PC-9 (cell line): ENCODE measurements at regions of chr21 and their contacts with region 1.

Region 1: GRCh38 chr21:45129189-45129923 is 55.0 kb downstream of the ADARB1 start:
- DNase-seq: peak in 1 of 2 experiments; percentile 68
- H3K4me3 ChIP-seq: no peak overlapping the region
- H3K27ac ChIP-seq: no peak overlapping the region
- H3K4me1 ChIP-seq: peaks cover 9% of the 10 kb centered on the region; the same call in 1 of the 2 replicates
- H3K27me3 ChIP-seq: no peaks in the 10 kb centered on the region
- CTCF ChIP-seq: no peak

Region 2: GRCh38 chr21:44444286-44444931 is 684.9 kb before region 1 on chr21:
- CTCF ChIA-PET with region 1: interaction called, 11 read pairs
- POLR2A ChIA-PET with region 1: no interaction called
- intact Hi-C with region 1: no loop called
- DNase-seq: no peak
- H3K4me3 ChIP-seq: no peak overlapping the region
- H3K27ac ChIP-seq: no peak overlapping the region
- H3K4me1 ChIP-seq: no peaks in the 10 kb centered on the region
- H3K27me3 ChIP-seq: peaks cover 72% of the 10 kb centered on the region
- CTCF ChIP-seq: peak; percentile 36; the same call in 1 of the 2 replicates

Region 3: GRCh38 chr21:44670642-44671432 is 458.5 kb before region 1 on chr21:
- CTCF ChIA-PET with region 1: no interaction called
- POLR2A ChIA-PET with region 1: no interaction called
- intact Hi-C with region 1: no loop called
- DNase-seq: no peak
- H3K4me3 ChIP-seq: no peak overlapping the region
- H3K27ac ChIP-seq: no peak overlapping the region
- H3K4me1 ChIP-seq: no peaks in the 10 kb centered on the region
- H3K27me3 ChIP-seq: peaks cover 27% of the 10 kb centered on the region
- CTCF ChIP-seq: no peak

Region 4: GRCh38 chr21:44801468-44802395 is 327.6 kb before region 1 on chr21 and contains the start of gene UBE2G2:
- CTCF ChIA-PET with region 1: no interaction called
- POLR2A ChIA-PET with region 1: no interaction called
- intact Hi-C with region 1: loop called (anchors 5 kb)
- DNase-seq: peak; percentile 47 to 77
- H3K4me3 ChIP-seq: peak within 1 kb of the TSS; percentile 88
- H3K27ac ChIP-seq: no peak within 1 kb of the TSS
- H3K4me1 ChIP-seq: peaks cover 11% of the 10 kb centered on the region
- H3K27me3 ChIP-seq: no peaks in the 10 kb centered on the region
- CTCF ChIP-seq: no peak; the same call in 1 of the 2 replicates
- total RNA-seq, gene UBE2G2: 51.9 and 52.7 TPM in 2 replicates

Region 5: DNA sequence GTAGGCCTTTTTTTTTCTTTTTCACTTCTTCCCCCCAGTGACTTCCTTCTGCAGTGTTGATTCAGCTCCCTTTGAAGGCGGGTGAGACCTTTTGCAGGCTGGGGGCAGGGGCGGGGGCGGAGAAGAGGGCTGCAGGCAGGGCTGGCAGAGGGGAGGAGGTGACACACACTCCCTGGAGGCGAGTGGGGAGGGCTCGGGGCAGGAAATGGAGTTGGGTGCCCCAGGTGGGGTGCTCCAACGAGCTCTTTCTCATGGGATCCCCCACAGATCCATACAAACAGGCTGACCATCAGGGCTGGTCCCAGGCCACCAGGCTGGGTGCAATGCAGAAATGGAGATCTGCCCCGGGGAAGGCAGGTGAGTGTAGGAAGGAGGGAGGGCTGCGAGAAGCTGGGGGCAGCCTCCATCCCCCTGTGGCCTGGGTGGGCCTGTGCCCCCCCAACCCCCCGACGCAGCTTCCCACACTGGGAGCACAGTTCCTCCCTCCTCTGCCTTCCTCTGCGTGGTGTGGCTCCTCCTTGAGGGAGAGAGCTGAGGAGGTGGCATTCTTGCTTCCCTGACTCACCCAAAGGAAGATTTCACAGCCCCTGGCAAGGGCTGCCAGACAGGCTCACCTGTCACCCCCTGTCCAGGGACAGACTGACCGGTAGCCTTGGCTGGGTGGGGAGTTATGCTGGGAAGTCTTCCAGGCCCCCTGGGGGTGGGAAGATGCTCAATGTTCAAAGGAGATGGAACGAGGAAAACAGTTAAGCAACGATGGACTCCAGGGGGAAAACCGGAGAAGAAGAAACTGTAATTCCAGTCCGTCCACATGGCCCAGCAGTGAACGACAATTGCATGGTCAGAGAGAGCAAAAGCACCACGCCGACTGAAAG is 201.5 kb before region 1 on chr21:
- CTCF ChIA-PET with region 1: no interaction called
- POLR2A ChIA-PET with region 1: no interaction called
- intact Hi-C with region 1: no loop called
- DNase-seq: peak; percentile 92 to 95
- H3K4me3 ChIP-seq: peak overlapping the region; percentile 39; the same call in 1 of the 2 replicates
- H3K27ac ChIP-seq: peak overlapping the region; percentile 97
- H3K4me1 ChIP-seq: peaks cover 62% of the 10 kb centered on the region
- H3K27me3 ChIP-seq: no peaks in the 10 kb centered on the region
- CTCF ChIP-seq: peak; percentile 45; the same call in 1 of the 2 replicates

Region 6: DNA sequence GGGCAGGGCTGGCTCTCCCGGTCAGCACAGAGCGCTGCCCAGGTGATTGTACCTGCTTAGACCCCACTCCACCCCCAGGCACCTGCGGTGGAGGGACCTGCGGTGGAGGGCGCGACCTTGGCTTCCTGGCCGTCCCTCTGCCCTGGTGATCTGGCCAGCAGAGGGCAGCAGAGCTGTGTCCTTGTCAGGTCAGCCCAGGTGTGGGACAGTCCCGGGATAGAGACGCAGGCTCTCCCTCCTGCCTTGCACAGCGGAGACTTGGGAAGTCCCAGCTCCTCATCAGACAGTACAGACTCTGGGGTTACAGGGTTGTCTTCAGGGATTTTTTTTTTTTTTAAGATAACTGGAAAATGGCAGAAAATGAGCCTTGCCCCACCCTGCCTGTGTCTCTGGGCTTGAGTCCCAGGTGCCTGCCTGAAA is 179.6 kb before region 1 on chr21:
- CTCF ChIA-PET with region 1: interaction called, 20 read pairs
- POLR2A ChIA-PET with region 1: no interaction called
- intact Hi-C with region 1: loop called (anchors 1 kb)
- DNase-seq: peak in 1 of 2 experiments; percentile 74
- H3K4me3 ChIP-seq: no peak overlapping the region
- H3K27ac ChIP-seq: no peak overlapping the region
- H3K4me1 ChIP-seq: no peaks in the 10 kb centered on the region
- H3K27me3 ChIP-seq: no peaks in the 10 kb centered on the region
- CTCF ChIP-seq: peak; percentile 86

Region 7: DNA sequence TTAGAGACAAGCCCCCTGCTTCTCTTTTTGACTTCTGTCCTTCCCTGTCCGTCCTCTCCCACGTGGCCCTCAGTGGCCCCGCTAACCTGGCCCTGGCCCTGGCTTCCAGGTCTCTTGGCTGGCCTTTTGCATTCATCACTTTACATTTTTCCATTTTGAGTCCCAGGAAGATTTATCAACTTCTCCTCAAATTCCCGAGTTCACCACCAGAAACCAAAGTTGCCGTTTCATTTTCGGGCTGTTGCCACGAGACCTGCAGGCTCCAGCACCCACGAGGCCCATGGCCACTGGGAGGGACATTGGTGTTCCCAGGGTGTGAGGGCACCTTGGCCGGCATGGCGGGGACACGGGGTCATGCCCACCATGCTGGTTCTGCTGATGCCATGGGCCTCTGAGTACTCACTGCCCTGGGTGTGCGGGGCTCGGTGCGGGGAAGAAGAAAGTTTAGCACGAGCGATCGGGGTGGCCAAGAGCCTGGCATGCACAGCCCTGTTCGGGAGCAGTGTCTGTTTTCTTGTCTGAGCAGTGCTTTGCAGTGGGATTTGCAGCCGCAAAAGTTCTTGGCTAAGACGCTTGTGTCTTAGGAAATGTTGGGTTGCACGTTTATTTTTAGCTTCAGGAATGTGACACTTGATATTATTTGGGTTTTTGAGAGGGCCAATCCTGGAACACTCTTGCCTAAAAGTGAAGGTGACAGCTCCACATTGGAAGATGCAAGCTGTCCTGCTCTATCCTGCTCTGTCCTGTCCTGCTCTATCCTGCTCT is 95.4 kb before region 1 on chr21:
- CTCF ChIA-PET with region 1: no interaction called
- POLR2A ChIA-PET with region 1: no interaction called
- intact Hi-C with region 1: no loop called
- DNase-seq: no peak
- H3K4me3 ChIP-seq: no peak overlapping the region
- H3K27ac ChIP-seq: no peak overlapping the region
- H3K4me1 ChIP-seq: no peaks in the 10 kb centered on the region
- H3K27me3 ChIP-seq: no peaks in the 10 kb centered on the region; the same call in 1 of the 2 replicates
- CTCF ChIP-seq: no peak

Region 8: GRCh38 chr21:45073301-45074047 is 55.9 kb before region 1 on chr21:
- CTCF ChIA-PET with region 1: interaction called, 3 read pairs
- POLR2A ChIA-PET with region 1: interaction called, 4 read pairs
- intact Hi-C with region 1: loop called (anchors 2 kb)
- DNase-seq: peak; percentile 74 to 79
- H3K4me3 ChIP-seq: peak overlapping the region; percentile 37; the same call in 1 of the 2 replicates
- H3K27ac ChIP-seq: peak overlapping the region; percentile 66
- H3K4me1 ChIP-seq: peaks cover 6% of the 10 kb centered on the region; the same call in 1 of the 2 replicates
- H3K27me3 ChIP-seq: no peaks in the 10 kb centered on the region
- CTCF ChIP-seq: no peak

Region 9: DNA sequence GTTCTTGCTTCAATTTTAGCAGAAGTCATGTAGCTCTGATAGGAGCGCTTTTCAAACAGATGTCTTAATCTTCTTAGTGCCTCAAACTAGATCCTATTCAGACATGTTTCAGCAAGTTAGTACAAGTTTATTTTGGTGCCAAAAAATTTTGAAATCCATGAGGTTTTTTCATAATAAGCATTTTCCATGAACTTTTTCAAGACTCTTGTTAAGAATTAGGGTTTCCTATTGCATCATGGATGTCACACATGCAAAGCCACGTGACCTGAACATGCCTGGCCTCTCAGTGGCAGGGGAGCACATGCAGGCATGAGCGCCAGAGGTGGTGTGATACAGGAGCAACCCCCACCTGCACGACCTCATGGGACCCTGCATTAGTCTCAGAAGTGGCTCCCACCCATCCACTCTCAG is 90.7 kb after region 1 on chr21:
- CTCF ChIA-PET with region 1: no interaction called
- POLR2A ChIA-PET with region 1: no interaction called
- intact Hi-C with region 1: no loop called
- DNase-seq: no peak
- H3K4me3 ChIP-seq: no peak overlapping the region
- H3K27ac ChIP-seq: no peak overlapping the region
- H3K4me1 ChIP-seq: no peaks in the 10 kb centered on the region
- H3K27me3 ChIP-seq: no peaks in the 10 kb centered on the region
- CTCF ChIP-seq: no peak